CD8-positive, alpha-beta memory T cell (primary cell): ENCODE measurements at regions of chr6 and their contacts with region 1.

Region 1: GRCh38 chr6:36027501-36028087 is at the start of gene MAPK14:
- DNase-seq: peak; percentile 98 to 99 (median 99)
- H3K4me3 ChIP-seq: peak within 1 kb of the TSS; percentile 92
- H3K4me3 Mint-ChIP-seq: peak within 1 kb of the TSS; percentile 88 to 95 (median 91)
- H3K27ac ChIP-seq: peak within 1 kb of the TSS; percentile 90
- H3K27ac Mint-ChIP-seq: peak within 1 kb of the TSS; percentile 83 to 95 (median 90)
- H3K4me1 ChIP-seq: peaks cover 23% of the 10 kb centered on the region
- H3K4me1 Mint-ChIP-seq: peaks cover 31 to 45% (median 40%) of the 10 kb centered on the region in 3 donors
- H3K27me3 ChIP-seq: no peaks in the 10 kb centered on the region
- H3K27me3 Mint-ChIP-seq: peaks cover 6 to 14% of the 10 kb centered on the region in 2 donors
- total RNA-seq, gene MAPK14: 46.5 to 48.4 TPM

Region 2: DNA sequence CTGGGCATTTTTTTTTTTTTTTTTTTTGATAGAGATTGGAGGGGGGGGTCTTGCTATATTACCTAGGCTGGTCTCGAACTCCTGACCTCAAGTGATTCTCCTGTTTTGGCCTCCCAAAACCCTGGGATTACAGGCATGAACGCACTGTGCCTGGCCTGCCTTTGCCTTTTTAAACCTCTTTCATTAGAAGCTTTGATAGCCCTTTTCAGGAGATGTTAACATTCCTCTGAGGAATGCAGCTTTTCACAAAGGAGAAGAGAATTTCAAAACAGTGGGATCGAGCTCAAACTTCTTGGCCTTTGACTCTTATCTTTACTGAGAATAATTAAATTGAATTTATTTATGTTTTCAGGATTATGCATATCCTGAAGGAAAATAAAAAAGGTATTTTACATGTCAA is 34.4 kb before region 1 on chr6:
- CTCF ChIA-PET with region 1: no interaction called
- POLR2A ChIA-PET with region 1: no interaction called
- DNase-seq: no peak
- H3K4me3 ChIP-seq: no peak overlapping the region
- H3K4me3 Mint-ChIP-seq: no peak overlapping the region
- H3K27ac ChIP-seq: no peak overlapping the region
- H3K27ac Mint-ChIP-seq: no peak overlapping the region
- H3K4me1 ChIP-seq: no peaks in the 10 kb centered on the region
- H3K4me1 Mint-ChIP-seq: no peaks in the 10 kb centered on the region
- H3K27me3 ChIP-seq: no peaks in the 10 kb centered on the region
- H3K27me3 Mint-ChIP-seq: peaks cover 7 to 21% of the 10 kb centered on the region in 2 donors

Region 3: GRCh38 chr6:36038120-36038876 is 10.7 kb after region 1 on chr6:
- CTCF ChIA-PET with region 1: interaction called, 12 read pairs
- POLR2A ChIA-PET with region 1: no interaction called
- DNase-seq: no peak
- H3K4me3 ChIP-seq: no peak overlapping the region
- H3K4me3 Mint-ChIP-seq: peak overlapping the region in 6 of 7 donors; percentile 1 to 66 (median 12)
- H3K27ac ChIP-seq: no peak overlapping the region
- H3K27ac Mint-ChIP-seq: peak overlapping the region in 7 of 8 donors; percentile 15 to 81 (median 66)
- H3K4me1 ChIP-seq: peaks cover 60% of the 10 kb centered on the region
- H3K4me1 Mint-ChIP-seq: peaks cover 73 to 89% (median 85%) of the 10 kb centered on the region in 3 donors
- H3K27me3 ChIP-seq: no peaks in the 10 kb centered on the region
- H3K27me3 Mint-ChIP-seq: no peaks in the 10 kb centered on the region

Region 4: DNA sequence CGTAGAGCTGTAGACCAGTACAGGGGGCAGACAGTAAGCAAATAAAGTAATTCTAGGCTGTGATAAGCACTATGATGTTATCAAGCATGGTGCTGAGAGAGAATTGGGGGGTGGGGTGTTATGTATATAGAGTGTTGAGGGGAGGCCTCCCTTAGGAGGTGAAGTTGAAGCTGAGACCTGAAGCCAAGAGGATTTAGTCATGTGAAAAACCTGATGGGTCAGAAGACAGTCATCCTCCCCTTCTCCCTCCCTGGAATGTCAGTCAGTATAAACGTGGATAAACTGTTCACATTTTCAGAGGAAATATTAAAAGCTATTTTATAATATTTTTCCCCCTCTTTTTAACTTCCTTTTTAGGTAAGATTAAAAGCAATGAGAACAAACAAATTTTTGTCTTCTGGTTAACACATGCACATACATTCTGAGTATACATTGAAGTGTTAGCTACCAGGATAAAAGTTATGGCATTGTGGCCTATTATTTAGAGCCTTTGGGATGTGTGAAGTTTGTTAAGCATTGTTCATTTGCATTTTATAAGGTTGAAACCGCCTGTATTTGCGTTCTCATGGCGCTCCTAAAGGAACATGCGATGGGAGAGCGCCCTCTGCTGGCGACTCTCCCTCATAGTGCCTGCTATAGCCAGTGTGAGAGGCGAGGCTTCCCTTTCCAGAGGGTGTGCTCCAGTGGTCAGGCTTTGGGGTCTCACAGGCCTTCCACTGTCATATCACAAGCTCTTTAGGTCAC is 67.3 kb after region 1 on chr6:
- CTCF ChIA-PET with region 1: interaction called, 81 read pairs
- POLR2A ChIA-PET with region 1: interaction called, 22 read pairs
- DNase-seq: peak; percentile 68 to 84 (median 74)
- H3K4me3 ChIP-seq: no peak overlapping the region
- H3K4me3 Mint-ChIP-seq: peak overlapping the region in 1 of 7 donors; percentile 15
- H3K27ac ChIP-seq: no peak overlapping the region
- H3K27ac Mint-ChIP-seq: peak overlapping the region; percentile 41 to 90 (median 70)
- H3K4me1 ChIP-seq: peaks cover 27% of the 10 kb centered on the region
- H3K4me1 Mint-ChIP-seq: peaks cover 34 to 47% (median 34%) of the 10 kb centered on the region in 3 donors
- H3K27me3 ChIP-seq: no peaks in the 10 kb centered on the region
- H3K27me3 Mint-ChIP-seq: no peaks in the 10 kb centered on the region

Region 5: GRCh38 chr6:36123257-36124139 is 95.9 kb after region 1 on chr6:
- CTCF ChIA-PET with region 1: interaction called, 35 read pairs
- POLR2A ChIA-PET with region 1: interaction called, 24 read pairs
- DNase-seq: peak; percentile 85 to 93 (median 90)
- H3K4me3 ChIP-seq: peak overlapping the region; percentile 20
- H3K4me3 Mint-ChIP-seq: peak overlapping the region; percentile 50 to 78 (median 57)
- H3K27ac ChIP-seq: peak overlapping the region; percentile 32
- H3K27ac Mint-ChIP-seq: peak overlapping the region; percentile 84 to 99 (median 96)
- H3K4me1 ChIP-seq: peaks cover 78% of the 10 kb centered on the region
- H3K4me1 Mint-ChIP-seq: peaks cover 84 to 96% (median 87%) of the 10 kb centered on the region in 3 donors
- H3K27me3 ChIP-seq: no peaks in the 10 kb centered on the region
- H3K27me3 Mint-ChIP-seq: no peaks in the 10 kb centered on the region

Region 6: GRCh38 chr6:36196880-36197548 is 169.4 kb after region 1 on chr6:
- CTCF ChIA-PET with region 1: interaction called, 16 read pairs
- POLR2A ChIA-PET with region 1: interaction called, 9 read pairs
- DNase-seq: peak; percentile 97 to 100 (median 99)
- H3K4me3 ChIP-seq: peak overlapping the region; percentile 89
- H3K4me3 Mint-ChIP-seq: peak overlapping the region; percentile 88 to 98 (median 93)
- H3K27ac ChIP-seq: peak overlapping the region; percentile 71
- H3K27ac Mint-ChIP-seq: peak overlapping the region; percentile 89 to 99 (median 91)
- H3K4me1 ChIP-seq: peaks cover 36% of the 10 kb centered on the region
- H3K4me1 Mint-ChIP-seq: peaks cover 42 to 61% (median 54%) of the 10 kb centered on the region in 3 donors
- H3K27me3 ChIP-seq: no peaks in the 10 kb centered on the region
- H3K27me3 Mint-ChIP-seq: no peaks in the 10 kb centered on the region

Region 7: DNA sequence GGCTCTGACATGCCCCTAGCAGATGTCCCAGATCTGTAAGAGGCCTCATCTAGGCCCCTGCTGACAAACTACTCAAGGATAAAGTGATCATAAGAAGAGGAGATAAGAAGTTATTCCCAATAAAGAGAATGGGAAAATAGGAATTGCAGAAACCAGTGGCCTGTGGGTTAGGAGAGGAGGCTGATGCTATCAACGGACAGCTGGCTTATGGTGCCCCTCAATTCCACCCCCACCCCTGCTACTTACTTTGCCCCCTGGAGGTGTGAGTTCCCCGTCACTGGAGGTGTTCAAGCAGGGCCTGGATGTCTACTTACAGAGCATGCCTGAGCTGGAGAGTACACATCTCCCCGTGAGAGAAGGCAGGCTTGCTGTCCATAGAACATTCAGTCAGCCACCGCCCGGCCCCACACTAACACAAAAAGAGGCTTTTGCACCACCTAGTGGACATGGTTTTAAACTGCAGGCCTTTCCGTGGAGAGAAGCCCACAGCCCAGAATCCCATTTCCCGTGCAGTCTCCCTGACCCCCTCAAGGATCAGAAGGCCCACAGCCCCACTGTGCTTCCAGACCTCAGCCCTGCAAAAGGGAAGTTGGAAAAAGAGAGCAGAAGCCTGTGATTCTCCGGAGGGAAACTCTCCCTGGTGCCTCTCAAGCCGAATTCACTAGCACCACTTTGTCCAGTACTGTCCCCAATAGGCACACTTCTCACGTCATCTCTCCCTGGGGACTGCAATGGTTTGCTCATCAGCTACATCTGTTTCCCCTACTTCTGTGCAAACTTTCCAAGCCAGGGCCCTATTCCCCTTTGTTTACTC is 332.9 kb after region 1 on chr6:
- CTCF ChIA-PET with region 1: interaction called, 40 read pairs
- POLR2A ChIA-PET with region 1: no interaction called
- DNase-seq: peak; percentile 48 to 79 (median 58)
- H3K4me3 ChIP-seq: no peak overlapping the region
- H3K4me3 Mint-ChIP-seq: no peak overlapping the region
- H3K27ac ChIP-seq: no peak overlapping the region
- H3K27ac Mint-ChIP-seq: peak overlapping the region in 1 of 8 donors; percentile 42
- H3K4me1 ChIP-seq: peaks cover 3% of the 10 kb centered on the region
- H3K4me1 Mint-ChIP-seq: peaks cover 15 to 29% (median 16%) of the 10 kb centered on the region in 3 donors
- H3K27me3 ChIP-seq: no peaks in the 10 kb centered on the region
- H3K27me3 Mint-ChIP-seq: peaks cover 2 to 3% of the 10 kb centered on the region in 2 donors